ENCODE measurements at regions of chr6 and their contacts with region 1.

Region 1: DNA sequence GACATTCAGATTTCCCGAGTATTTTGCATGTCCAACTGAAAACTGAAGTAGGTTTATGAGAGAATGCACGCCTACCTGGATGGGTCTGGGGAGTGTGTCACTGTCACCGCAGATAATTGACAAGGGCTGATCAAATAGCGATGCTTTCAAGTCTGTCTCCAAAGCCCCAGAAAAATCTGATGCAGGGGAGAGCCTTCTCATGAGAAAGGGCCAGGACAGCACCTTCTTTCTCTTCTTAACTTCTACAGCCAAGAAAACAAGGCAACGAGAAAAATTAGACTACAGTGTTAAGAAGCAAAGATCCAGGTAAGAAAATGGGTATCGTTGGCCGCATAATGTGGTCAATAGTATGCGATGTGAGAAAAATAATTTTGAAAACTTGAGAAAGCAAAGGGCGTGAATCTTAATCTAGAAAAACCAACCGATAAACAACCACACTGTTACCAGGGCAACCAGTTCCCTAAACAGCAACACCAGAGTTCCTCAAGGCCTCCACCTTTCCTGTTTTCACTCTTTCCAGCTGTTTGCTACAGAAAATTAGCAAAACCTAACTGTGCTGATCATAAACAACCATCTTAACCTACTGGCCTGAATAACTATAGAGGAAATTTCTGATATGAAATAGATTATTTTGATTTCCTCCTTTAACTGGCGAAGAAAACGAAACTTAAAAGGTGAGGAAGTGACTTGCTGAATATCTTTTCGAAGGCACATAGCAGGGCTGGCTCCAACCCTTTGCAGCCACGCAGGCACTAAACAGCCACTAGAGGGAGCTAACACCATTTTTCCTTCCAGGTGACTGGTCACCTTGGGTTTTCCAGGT is 2.6 kb downstream of the TAGAP start:
- DNase-seq: peak; percentile 50 to 94 (median 69)
- ATAC-seq: peak; percentile 62 to 68 (median 64)
- H3K4me3 ChIP-seq: peak overlapping the region; percentile 69 to 95
- H3K4me3 Mint-ChIP-seq: peak overlapping the region; percentile 96 to 98 (median 96)
- H3K27ac ChIP-seq: peak overlapping the region; percentile 90
- H3K27ac Mint-ChIP-seq: peak overlapping the region; percentile 98
- H3K4me1 ChIP-seq: peaks cover 51 to 53% of the 10 kb centered on the region in 2 experiments
- H3K4me1 Mint-ChIP-seq: peaks cover 64 to 68% (median 67%) of the 10 kb centered on the region in 3 donors
- H3K27me3 ChIP-seq: no peaks in the 10 kb centered on the region
- H3K27me3 Mint-ChIP-seq: no peaks in the 10 kb centered on the region

Region 2: GRCh38 chr6:159008656-159009288 is 33.4 kb before region 1 on chr6:
- CTCF ChIA-PET with region 1: interaction called, 4 to 43 read pairs
- POLR2A ChIA-PET with region 1: interaction called, 10 to 11 read pairs
- DNase-seq: peak in 5 of 35 experiments; percentile 6 to 78 (median 27)
- ATAC-seq: peak; percentile 69 to 76 (median 74)
- H3K4me3 ChIP-seq: peak overlapping the region in 1 of 2 donors; percentile 37
- H3K4me3 Mint-ChIP-seq: peak overlapping the region; percentile 34 to 51 (median 40)
- H3K27ac ChIP-seq: peak overlapping the region; percentile 8
- H3K27ac Mint-ChIP-seq: peak overlapping the region; percentile 45 to 59
- H3K4me1 ChIP-seq: peaks cover 4 to 25% of the 10 kb centered on the region in 2 experiments
- H3K4me1 Mint-ChIP-seq: peaks cover 36 to 50% (median 38%) of the 10 kb centered on the region in 3 donors
- H3K27me3 ChIP-seq: no peaks in the 10 kb centered on the region
- H3K27me3 Mint-ChIP-seq: no peaks in the 10 kb centered on the region

Region 3: DNA sequence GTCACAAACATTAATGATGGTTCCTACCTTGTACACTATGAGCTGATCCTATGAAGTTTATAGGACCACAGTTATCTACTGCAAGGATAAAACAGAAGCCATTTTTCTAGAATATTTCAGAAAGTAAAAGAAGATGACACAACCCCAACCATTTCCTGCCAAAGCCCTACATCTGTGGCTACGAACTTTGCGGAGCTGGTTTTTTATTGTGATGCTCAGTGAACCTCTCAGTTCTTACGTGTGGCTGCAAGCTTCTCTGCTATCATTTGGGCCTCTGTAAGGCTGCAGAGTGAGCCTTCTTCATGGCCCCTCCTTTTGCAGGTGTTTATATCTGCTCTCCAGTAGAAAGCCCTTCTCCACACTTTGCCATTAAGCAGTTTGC is 20.3 kb after region 1 on chr6:
- CTCF ChIA-PET with region 1: interaction called, 3 to 48 read pairs
- POLR2A ChIA-PET with region 1: interaction called, 11 to 95 read pairs
- DNase-seq: peak; percentile 34 to 86 (median 67)
- ATAC-seq: peak; percentile 93 to 94 (median 94)
- H3K4me3 ChIP-seq: no peak overlapping the region
- H3K4me3 Mint-ChIP-seq: peak overlapping the region; percentile 52 to 77 (median 55)
- H3K27ac ChIP-seq: peak overlapping the region; percentile 94
- H3K27ac Mint-ChIP-seq: peak overlapping the region; percentile 98 to 99
- H3K4me1 ChIP-seq: peaks cover 36 to 74% of the 10 kb centered on the region in 2 experiments
- H3K4me1 Mint-ChIP-seq: peaks cover 92 to 97% (median 96%) of the 10 kb centered on the region in 3 donors
- H3K27me3 ChIP-seq: no peaks in the 10 kb centered on the region
- H3K27me3 Mint-ChIP-seq: no peaks in the 10 kb centered on the region

Region 4: DNA sequence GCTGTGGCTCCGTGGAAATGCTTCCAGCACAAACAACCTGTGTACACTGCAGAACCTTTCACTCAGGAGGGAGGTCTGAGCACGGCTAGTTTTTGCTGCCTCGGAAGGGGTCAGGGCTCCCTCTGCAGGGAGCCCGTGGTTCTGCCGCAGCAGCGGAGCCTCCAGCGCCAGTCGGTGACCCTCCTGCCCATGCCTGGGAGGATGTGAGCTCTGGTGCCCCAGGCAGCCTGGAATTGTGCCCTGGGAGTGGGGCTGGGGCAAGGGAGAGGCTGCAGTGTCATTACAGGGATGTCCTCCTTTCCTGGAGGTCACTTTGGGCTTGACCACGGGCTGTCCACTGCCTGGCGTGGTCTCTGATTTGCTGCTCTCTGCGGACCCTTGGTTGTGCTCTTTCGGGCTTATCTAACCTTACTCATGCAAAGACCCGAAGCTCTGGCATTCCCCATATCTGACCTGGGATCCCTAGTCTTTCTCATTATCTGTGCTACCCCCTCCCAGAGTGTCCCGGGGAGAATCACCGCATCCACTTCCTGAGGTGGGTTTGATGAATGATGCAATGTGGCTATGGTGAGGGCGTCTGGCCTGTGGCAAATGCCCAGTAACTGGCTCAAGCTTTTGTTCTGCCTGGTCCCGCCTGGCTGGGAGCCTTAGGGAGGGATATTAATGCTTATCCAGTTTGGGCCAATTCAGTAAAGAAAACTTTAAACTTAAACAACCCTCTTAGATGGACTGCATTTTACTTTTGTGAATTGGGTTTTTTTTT is 62.1 kb after region 1 on chr6:
- CTCF ChIA-PET with region 1: interaction called, 28 to 101 read pairs
- POLR2A ChIA-PET with region 1: interaction called, 8 to 57 read pairs
- DNase-seq: peak; percentile 59 to 88 (median 74)
- ATAC-seq: peak; percentile 53 to 68 (median 66)
- H3K4me3 ChIP-seq: no peak overlapping the region
- H3K4me3 Mint-ChIP-seq: peak overlapping the region in 2 of 3 donors; percentile 44 to 70
- H3K27ac ChIP-seq: peak overlapping the region; percentile 53
- H3K27ac Mint-ChIP-seq: peak overlapping the region; percentile 86 to 95
- H3K4me1 ChIP-seq: peaks cover 53 to 75% of the 10 kb centered on the region in 2 experiments
- H3K4me1 Mint-ChIP-seq: peaks cover 76 to 91% (median 81%) of the 10 kb centered on the region in 3 donors
- H3K27me3 ChIP-seq: no peaks in the 10 kb centered on the region
- H3K27me3 Mint-ChIP-seq: no peaks in the 10 kb centered on the region

Region 5: DNA sequence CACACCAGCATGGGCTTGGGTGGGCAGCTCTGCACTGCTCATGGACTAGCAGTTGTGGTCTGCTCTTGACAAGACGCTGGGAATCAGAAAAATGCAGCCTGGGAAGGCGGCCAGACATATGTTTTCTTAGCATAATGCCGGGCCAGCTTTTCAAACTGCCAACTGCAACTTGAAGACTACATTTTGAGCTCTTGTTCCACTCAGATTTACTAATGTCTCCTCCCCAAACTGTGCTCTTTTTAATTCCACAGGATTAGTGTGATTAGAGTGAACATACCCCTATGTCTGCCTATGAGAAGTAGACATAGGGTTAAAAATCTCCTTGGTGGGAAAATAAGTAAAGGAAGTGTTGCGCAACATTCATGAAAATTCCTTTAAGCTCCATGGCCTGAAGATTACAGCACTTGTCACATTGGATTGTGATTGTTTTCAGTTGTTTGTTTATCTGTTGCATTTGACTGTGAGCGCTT is 121.7 kb after region 1 on chr6:
- CTCF ChIA-PET with region 1: no interaction called
- POLR2A ChIA-PET with region 1: no interaction called
- DNase-seq: no peak
- ATAC-seq: no peak
- H3K4me3 ChIP-seq: no peak overlapping the region
- H3K4me3 Mint-ChIP-seq: no peak overlapping the region
- H3K27ac ChIP-seq: no peak overlapping the region
- H3K27ac Mint-ChIP-seq: no peak overlapping the region
- H3K4me1 ChIP-seq: peaks cover 2 to 5% of the 10 kb centered on the region in 2 experiments
- H3K4me1 Mint-ChIP-seq: peaks cover 9 to 11% (median 11%) of the 10 kb centered on the region in 3 donors
- H3K27me3 ChIP-seq: peaks cover 7 to 30% of the 10 kb centered on the region in 2 experiments
- H3K27me3 Mint-ChIP-seq: peaks cover 60 to 61% of the 10 kb centered on the region in 2 donors

Measured in T-cell (primary cell).